MCF 10A (cell line): ENCODE measurements at regions of chr6 and their contacts with region 1.

Region 1: GRCh38 chr6:16332175-16332542 is 93.8 kb downstream of the GMPR start:
- DNase-seq: peak; percentile 77
- H3K4me3 Mint-ChIP-seq: no peak overlapping the region
- H3K27ac Mint-ChIP-seq: no peak overlapping the region
- H3K4me1 Mint-ChIP-seq: peaks cover 29% of the 10 kb centered on the region
- H3K27me3 Mint-ChIP-seq: no peaks in the 10 kb centered on the region
- CTCF ChIP-seq: peak; percentile 77

Region 2: DNA sequence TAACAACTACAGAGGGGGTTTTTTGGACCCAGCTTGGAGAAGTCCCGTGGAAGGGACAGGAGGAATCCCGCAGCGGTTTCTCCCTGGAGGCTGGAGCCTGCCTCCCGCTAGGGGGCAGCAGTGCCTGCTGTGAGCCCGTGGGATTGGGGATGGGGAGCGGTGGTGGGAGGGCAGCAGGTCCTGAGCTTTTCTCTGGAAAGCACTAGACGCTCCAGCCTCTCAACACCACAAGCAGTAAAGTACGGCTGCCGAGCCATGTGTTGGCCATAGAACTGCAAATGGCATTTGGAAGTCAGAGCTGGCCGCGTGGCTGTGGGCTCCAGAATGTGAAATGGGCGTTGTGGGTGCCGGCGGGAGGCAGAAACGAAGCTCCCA is 46.0 kb before region 1 on chr6:
- CTCF ChIA-PET with region 1: interaction called, 3 read pairs
- POLR2A ChIA-PET with region 1: no interaction called
- intact Hi-C with region 1: loop called (anchors 2 kb)
- DNase-seq: peak; percentile 30
- H3K4me3 Mint-ChIP-seq: no peak overlapping the region
- H3K27ac Mint-ChIP-seq: no peak overlapping the region
- H3K4me1 Mint-ChIP-seq: no peaks in the 10 kb centered on the region
- H3K27me3 Mint-ChIP-seq: no peaks in the 10 kb centered on the region
- CTCF ChIP-seq: peak; percentile 30

Region 3: DNA sequence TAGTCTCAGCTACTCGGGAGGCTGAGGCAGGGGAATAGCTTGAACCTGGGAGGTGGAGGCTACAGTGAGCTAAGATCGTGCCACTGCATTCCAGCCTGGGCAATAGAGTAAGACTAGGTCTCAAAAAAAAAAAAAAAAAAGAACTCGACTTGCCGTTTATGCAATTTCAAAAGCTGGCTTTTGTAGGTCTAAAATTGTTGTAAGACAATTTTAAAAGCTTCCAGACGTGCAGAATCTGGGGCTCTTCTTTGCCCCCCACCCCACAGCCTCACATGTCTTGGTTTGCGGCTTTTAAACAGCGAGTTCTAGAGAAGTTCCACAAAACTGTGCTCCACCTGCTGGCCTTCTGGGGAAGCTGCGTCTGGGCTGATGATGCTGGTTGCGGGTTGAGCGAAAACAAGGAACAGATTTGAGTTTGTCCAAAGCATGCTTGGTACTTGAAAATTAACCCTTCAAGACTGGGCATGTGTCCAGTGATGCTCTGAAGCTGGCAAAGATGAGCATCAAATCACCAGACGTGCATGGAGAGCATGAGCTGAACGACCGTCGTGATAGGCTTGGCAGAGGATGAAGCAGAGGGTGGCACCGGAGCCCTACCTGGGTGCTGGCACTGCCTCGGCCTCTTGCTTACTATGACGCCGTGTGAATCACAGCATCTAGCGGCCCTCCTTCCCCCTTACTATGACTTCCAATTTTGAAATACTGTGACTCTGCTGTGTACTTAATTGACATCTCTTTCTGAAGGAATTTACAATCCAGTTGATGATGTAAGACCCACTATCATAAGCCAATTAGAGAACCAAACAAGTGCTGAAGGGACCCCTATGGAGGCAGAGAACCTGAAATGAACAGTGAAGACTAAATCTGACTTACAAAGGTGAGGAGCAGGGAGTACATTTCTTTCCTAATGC is 77.6 kb after region 1 on chr6:
- CTCF ChIA-PET with region 1: interaction called, 27 read pairs
- POLR2A ChIA-PET with region 1: no interaction called
- intact Hi-C with region 1: loop called (anchors 1 kb)
- DNase-seq: peak; percentile 59
- H3K4me3 Mint-ChIP-seq: no peak overlapping the region
- H3K27ac Mint-ChIP-seq: no peak overlapping the region
- H3K4me1 Mint-ChIP-seq: no peaks in the 10 kb centered on the region
- H3K27me3 Mint-ChIP-seq: no peaks in the 10 kb centered on the region
- CTCF ChIP-seq: peak; percentile 53

Region 4: GRCh38 chr6:16651871-16652270 is 319.7 kb after region 1 on chr6:
- CTCF ChIA-PET with region 1: no interaction called
- POLR2A ChIA-PET with region 1: no interaction called
- intact Hi-C with region 1: no loop called
- DNase-seq: no peak
- H3K4me3 Mint-ChIP-seq: no peak overlapping the region
- H3K27ac Mint-ChIP-seq: no peak overlapping the region
- H3K4me1 Mint-ChIP-seq: no peaks in the 10 kb centered on the region
- H3K27me3 Mint-ChIP-seq: no peaks in the 10 kb centered on the region
- CTCF ChIP-seq: no peak

Region 5: DNA sequence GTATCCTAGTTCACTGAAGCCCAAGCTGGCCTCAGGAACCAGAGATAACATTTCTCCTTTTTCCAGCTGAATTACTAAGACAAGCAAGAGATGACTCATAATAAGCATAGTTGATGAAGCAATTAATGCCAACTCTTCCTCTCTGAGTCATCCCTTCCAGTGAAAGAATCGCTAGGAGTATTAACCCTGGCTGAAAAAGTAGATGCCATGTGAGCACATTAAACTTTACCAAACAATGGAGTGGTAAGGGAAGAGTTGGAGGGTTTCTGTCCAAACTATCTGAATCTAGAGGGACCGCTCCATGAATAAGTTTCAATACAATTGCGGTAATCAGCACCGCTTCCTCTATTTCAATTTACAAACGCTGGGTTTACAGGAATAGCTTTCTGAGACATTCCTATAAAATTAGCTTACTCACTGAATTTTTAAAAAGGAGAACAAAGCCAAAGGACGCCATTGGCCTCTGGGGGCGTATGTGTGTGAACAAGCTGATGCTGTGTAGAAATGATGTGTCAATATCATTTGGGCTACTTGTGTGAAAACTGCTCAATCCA is 380.8 kb after region 1 on chr6:
- CTCF ChIA-PET with region 1: interaction called, 4 read pairs
- POLR2A ChIA-PET with region 1: interaction called, 4 read pairs
- intact Hi-C with region 1: loop called (anchors 1 kb)
- DNase-seq: peak; percentile 95
- H3K4me3 Mint-ChIP-seq: peak overlapping the region; percentile 63
- H3K27ac Mint-ChIP-seq: peak overlapping the region; percentile 96
- H3K4me1 Mint-ChIP-seq: peaks cover 28% of the 10 kb centered on the region
- H3K27me3 Mint-ChIP-seq: no peaks in the 10 kb centered on the region
- CTCF ChIP-seq: no peak

Region 6: GRCh38 chr6:16819752-16820151 is 487.6 kb after region 1 on chr6:
- CTCF ChIA-PET with region 1: no interaction called
- POLR2A ChIA-PET with region 1: no interaction called
- intact Hi-C with region 1: loop called (anchors 5 kb)
- DNase-seq: peak; percentile 36
- H3K4me3 Mint-ChIP-seq: no peak overlapping the region
- H3K27ac Mint-ChIP-seq: no peak overlapping the region
- H3K4me1 Mint-ChIP-seq: peaks cover 10% of the 10 kb centered on the region
- H3K27me3 Mint-ChIP-seq: no peaks in the 10 kb centered on the region
- CTCF ChIP-seq: peak; percentile 31

Region 7: DNA sequence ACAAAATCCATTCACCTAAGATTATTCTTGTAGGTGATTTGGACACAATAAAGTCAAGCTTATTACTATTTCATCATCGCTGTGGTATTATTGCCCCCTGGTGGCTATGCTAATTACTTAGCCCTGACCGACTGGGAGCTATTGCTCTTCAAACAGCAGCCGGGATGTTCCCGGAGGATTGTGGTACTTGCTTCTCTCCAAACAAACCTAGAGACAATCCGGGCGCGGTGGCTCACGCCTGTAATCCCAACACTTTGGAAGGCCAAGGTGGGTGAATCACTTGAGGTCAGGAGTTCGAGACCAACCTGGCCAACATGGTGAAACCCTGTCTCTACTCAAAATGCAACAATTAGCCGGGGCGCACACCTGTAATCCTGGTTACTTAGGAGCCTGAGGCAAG is 754.3 kb after region 1 on chr6:
- CTCF ChIA-PET with region 1: interaction called, 4 read pairs
- POLR2A ChIA-PET with region 1: interaction called, 3 read pairs
- intact Hi-C with region 1: loop called (anchors 1 kb)
- DNase-seq: peak; percentile 76
- H3K4me3 Mint-ChIP-seq: no peak overlapping the region
- H3K27ac Mint-ChIP-seq: no peak overlapping the region
- H3K4me1 Mint-ChIP-seq: no peaks in the 10 kb centered on the region
- H3K27me3 Mint-ChIP-seq: no peaks in the 10 kb centered on the region
- CTCF ChIP-seq: peak; percentile 57